Adrenal gland (tissue), 19 donors: ENCODE measurements at regions of chr9 and their contacts with region 1.

Region 1: GRCh38 chr9:34126207-34127034 is at the start of gene DCAF12:
- DNase-seq: peak; percentile 91 to 95 (median 92)
- H3K4me3 ChIP-seq: peak within 1 kb of the TSS; percentile 28 to 80 (median 65)
- H3K27ac ChIP-seq: peak within 1 kb of the TSS; percentile 69 to 96 (median 91)
- H3K4me1 ChIP-seq: peaks cover 36 to 46% of the 10 kb centered on the region in 2 donors
- H3K27me3 ChIP-seq: no peaks in the 10 kb centered on the region
- CTCF ChIP-seq: no peak
- POLR2A ChIP-seq: peak; percentile 19 to 82
- total RNA-seq, gene DCAF12: 45.0 to 74.9 (median 64.9) TPM

Region 2: DNA sequence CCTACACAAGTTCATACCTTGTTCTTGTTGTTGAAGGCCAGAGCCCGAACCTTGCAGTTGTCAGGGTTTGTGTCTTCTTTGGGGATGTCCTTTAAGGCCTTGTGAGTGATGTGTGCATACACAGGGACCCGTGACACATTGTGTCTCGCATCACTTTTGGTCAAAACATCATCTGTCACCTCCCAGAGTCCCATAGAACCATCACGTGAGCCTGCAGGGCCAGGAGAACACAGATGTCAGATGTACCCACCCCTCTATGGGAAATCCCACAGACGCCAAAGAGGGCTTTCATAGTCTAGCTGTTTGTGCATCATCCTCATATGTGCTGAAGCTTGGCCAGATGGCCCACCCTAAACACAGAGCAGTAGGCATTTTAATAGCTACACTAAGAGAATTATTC is 28.1 kb before region 1 on chr9:
- intact Hi-C with region 1: no loop called
- DNase-seq: no peak
- H3K4me3 ChIP-seq: no peak overlapping the region
- H3K27ac ChIP-seq: no peak overlapping the region
- H3K4me1 ChIP-seq: peaks cover 6% of the 10 kb centered on the region in 2 donors
- H3K27me3 ChIP-seq: no peaks in the 10 kb centered on the region
- CTCF ChIP-seq: no peak
- POLR2A ChIP-seq: no peak

Region 3: DNA sequence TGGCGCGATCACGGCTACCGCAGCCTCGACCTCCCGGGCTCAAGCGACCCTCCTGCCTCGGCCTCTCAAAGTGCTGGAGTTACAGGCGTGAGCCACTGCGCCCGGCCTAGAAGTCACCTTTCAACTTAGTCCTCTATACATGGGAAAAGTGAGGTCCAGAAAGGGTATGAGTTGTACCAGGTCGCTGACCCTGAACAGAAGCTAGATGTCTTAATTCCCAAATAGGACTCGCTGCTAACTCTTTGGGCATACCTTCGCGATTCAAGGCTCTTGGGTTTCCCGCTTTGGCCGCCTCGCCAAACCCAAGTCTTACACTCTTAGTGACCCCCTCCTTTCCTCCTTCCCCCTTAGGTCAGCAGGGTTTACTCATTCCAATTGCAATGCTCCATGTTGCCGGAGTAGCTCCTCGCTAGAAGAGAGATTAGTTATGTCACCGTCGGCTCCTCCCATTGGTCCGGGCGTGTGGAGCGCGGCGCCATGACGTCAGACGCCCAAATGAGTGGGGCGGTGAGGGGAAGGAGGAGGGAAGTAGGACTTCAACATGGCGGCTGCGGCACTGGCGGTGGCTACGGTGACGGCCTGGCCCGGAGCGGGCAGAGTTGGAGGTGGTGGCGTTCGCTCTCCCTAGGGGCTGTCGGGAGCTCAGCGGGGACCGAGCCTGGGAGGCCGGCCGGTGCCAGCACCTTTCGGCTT is 52.2 kb after region 1 on chr9 and contains the start of gene UBAP1:
- intact Hi-C with region 1: loop called in 1 of 2 experiments (anchors 10 kb)
- DNase-seq: peak; percentile 96 to 99 (median 98)
- H3K4me3 ChIP-seq: peak within 1 kb of the TSS in 3 of 4 donors; percentile 80 to 84 (median 82)
- H3K27ac ChIP-seq: peak within 1 kb of the TSS; percentile 83 to 99 (median 93)
- H3K4me1 ChIP-seq: peaks cover 12 to 15% of the 10 kb centered on the region in 2 donors
- H3K27me3 ChIP-seq: no peaks in the 10 kb centered on the region
- CTCF ChIP-seq: peak in 1 of 6 experiments; percentile 8
- POLR2A ChIP-seq: peak; percentile 83 to 98
- total RNA-seq, gene UBAP1: 43.8 to 91.7 (median 83.1) TPM

Region 4: GRCh38 chr9:34252670-34253459 is 126.4 kb after region 1 on chr9:
- intact Hi-C with region 1: loop called in 1 of 2 experiments (anchors 10 kb)
- DNase-seq: peak; percentile 73 to 92 (median 78)
- H3K4me3 ChIP-seq: no peak overlapping the region
- H3K27ac ChIP-seq: peak overlapping the region; percentile 45 to 86 (median 70)
- H3K4me1 ChIP-seq: peaks cover 23 to 46% of the 10 kb centered on the region in 2 donors
- H3K27me3 ChIP-seq: no peaks in the 10 kb centered on the region
- CTCF ChIP-seq: peak; percentile 77 to 94 (median 89)
- POLR2A ChIP-seq: no peak